Activated CD8-positive, alpha-beta T cell treated with anti-CD3 and anti-CD28 coated beads for 36 hours (primary cell): ENCODE measurements at regions of chr6 and their contacts with region 1.

Region 1: DNA sequence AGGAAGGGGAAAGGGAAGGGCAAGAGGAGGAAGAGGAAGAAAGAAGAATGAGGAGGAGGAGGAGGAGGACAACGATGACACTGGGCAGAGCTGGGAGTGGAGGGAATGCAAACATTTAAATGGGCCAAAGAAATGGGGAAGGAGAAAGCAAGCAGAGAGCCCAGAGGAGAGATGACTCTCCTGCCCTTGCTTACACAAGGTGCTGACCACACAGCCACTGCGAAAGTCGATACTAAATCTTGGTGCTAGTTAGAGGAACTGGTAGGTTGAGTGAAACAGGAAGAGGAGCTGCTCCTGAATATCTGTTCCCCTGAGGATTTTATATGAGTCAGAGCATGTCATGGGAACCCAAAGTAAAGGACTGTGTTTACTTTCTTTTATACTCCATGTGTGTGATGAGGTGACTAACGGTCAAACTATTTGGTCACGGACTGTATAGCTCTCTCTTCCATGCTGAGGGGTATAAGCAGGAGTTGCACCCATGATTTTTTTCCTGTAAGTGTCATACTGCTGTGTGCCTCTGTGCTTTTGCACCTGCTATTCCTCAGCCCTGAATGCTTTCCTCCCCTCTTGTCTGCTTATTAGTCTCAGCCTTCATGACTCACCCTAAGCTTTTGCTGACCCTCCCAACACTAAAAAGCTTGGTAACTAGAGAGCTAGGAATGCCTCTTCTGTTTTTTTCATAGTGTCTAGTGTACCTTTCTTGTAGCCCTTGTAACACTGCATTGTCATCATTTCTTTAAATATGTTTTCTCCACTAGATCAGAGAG is 9.5 kb upstream of the PAQR8 start:
- DNase-seq: no peak
- ATAC-seq: peak; percentile 56
- H3K4me3 Mint-ChIP-seq: no peak overlapping the region
- H3K27ac Mint-ChIP-seq: no peak overlapping the region
- H3K4me1 Mint-ChIP-seq: peaks cover 19% of the 10 kb centered on the region
- H3K27me3 Mint-ChIP-seq: no peaks in the 10 kb centered on the region
- CTCF ChIP-seq: no peak

Region 2: DNA sequence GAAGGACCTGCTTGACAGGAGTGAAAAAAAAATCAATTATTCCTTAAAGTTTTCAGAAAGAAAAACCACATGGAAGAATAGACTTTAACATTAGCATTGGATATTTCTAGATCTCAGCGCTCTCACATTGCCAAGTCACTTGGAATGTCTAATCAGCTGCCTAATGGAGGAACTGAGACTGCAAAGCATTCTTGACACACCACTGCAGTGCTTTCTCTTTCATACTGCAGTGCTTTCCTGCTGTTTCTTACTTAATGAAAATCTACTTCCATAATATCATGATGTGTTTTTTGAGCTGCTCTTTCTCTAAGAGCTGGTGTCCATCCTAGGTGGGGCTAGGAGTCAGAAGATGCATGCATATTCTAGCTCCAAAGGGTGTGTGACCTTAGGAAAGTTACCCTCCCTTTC is 47.4 kb before region 1 on chr6:
- CTCF ChIA-PET with region 1: no interaction called
- POLR2A ChIA-PET with region 1: no interaction called
- intact Hi-C with region 1: loop called (anchors 5 kb)
- DNase-seq: no peak
- ATAC-seq: peak; percentile 42
- H3K4me3 Mint-ChIP-seq: peak overlapping the region; percentile 57
- H3K27ac Mint-ChIP-seq: peak overlapping the region; percentile 92
- H3K4me1 Mint-ChIP-seq: peaks cover 67% of the 10 kb centered on the region
- H3K27me3 Mint-ChIP-seq: no peaks in the 10 kb centered on the region
- CTCF ChIP-seq: no peak

Region 3: GRCh38 chr6:52325695-52326441 is 26.6 kb before region 1 on chr6:
- CTCF ChIA-PET with region 1: no interaction called
- POLR2A ChIA-PET with region 1: no interaction called
- intact Hi-C with region 1: no loop called
- DNase-seq: no peak
- ATAC-seq: no peak
- H3K4me3 Mint-ChIP-seq: no peak overlapping the region
- H3K27ac Mint-ChIP-seq: no peak overlapping the region
- H3K4me1 Mint-ChIP-seq: peaks cover 4% of the 10 kb centered on the region
- H3K27me3 Mint-ChIP-seq: no peaks in the 10 kb centered on the region
- CTCF ChIP-seq: no peak